ENCODE measurements at regions of chr16 and their contacts with region 1.

Region 1: DNA sequence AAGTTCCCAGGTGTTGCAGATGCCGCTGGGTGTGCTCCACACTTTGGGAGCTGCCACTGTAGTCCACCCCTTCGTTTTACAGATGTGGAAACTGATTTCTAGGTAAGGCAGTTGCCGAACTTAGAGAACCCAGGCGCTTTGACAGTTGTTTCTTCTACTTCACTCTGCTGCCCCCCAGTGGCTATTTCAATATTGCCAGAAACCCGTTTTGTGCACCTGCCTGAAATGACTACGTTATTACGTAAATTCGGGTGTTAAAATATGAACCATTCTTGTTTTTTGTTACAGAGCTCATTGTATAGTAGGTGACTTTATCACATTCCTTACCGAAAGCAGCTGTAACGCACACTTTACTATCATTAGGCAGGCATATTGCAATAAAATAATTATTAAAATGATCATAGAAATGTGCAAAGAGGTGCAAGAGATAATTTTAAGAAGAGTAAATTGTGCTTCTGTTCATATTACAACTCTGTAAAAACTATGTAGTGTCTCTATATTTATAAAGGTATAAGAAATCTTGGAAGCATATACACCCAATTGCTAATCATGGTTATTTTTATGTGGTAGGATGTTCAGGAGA is 44.9 kb downstream of the OTOA start:
- DNase-seq: peak; percentile 67 to 87 (median 74)
- H3K4me3 ChIP-seq: no peak overlapping the region
- H3K4me3 Mint-ChIP-seq: peak overlapping the region in 1 of 7 donors; percentile 18
- H3K27ac ChIP-seq: no peak overlapping the region
- H3K27ac Mint-ChIP-seq: no peak overlapping the region
- H3K4me1 ChIP-seq: peaks cover 7% of the 10 kb centered on the region
- H3K4me1 Mint-ChIP-seq: peaks cover 2 to 6% (median 5%) of the 10 kb centered on the region in 3 donors
- H3K27me3 ChIP-seq: no peaks in the 10 kb centered on the region
- H3K27me3 Mint-ChIP-seq: peaks cover 0 to 1% of the 10 kb centered on the region in 2 donors

Region 2: GRCh38 chr16:21222495-21223337 is 485.9 kb before region 1 on chr16:
- CTCF ChIA-PET with region 1: no interaction called
- POLR2A ChIA-PET with region 1: no interaction called
- DNase-seq: no peak
- H3K4me3 ChIP-seq: no peak overlapping the region
- H3K4me3 Mint-ChIP-seq: no peak overlapping the region
- H3K27ac ChIP-seq: no peak overlapping the region
- H3K27ac Mint-ChIP-seq: no peak overlapping the region
- H3K4me1 ChIP-seq: no peaks in the 10 kb centered on the region
- H3K4me1 Mint-ChIP-seq: no peaks in the 10 kb centered on the region
- H3K27me3 ChIP-seq: no peaks in the 10 kb centered on the region
- H3K27me3 Mint-ChIP-seq: peaks cover 12 to 45% of the 10 kb centered on the region in 2 donors

Region 3: GRCh38 chr16:21584817-21585216 is 123.8 kb before region 1 on chr16:
- CTCF ChIA-PET with region 1: interaction called, 14 read pairs
- POLR2A ChIA-PET with region 1: no interaction called
- DNase-seq: no peak
- H3K4me3 ChIP-seq: no peak overlapping the region
- H3K4me3 Mint-ChIP-seq: no peak overlapping the region
- H3K27ac ChIP-seq: no peak overlapping the region
- H3K27ac Mint-ChIP-seq: peak overlapping the region in 1 of 8 donors; percentile 22
- H3K4me1 ChIP-seq: no peaks in the 10 kb centered on the region
- H3K4me1 Mint-ChIP-seq: peaks cover 0 to 4% (median 1%) of the 10 kb centered on the region in 3 donors
- H3K27me3 ChIP-seq: no peaks in the 10 kb centered on the region
- H3K27me3 Mint-ChIP-seq: no peaks in the 10 kb centered on the region

Region 4: GRCh38 chr16:21646721-21647561 is 61.7 kb before region 1 on chr16:
- CTCF ChIA-PET with region 1: interaction called, 16 read pairs
- POLR2A ChIA-PET with region 1: no interaction called
- DNase-seq: peak; percentile 42 to 85 (median 72)
- H3K4me3 ChIP-seq: peak overlapping the region; percentile 12
- H3K4me3 Mint-ChIP-seq: peak overlapping the region; percentile 68 to 82 (median 78)
- H3K27ac ChIP-seq: peak overlapping the region; percentile 26
- H3K27ac Mint-ChIP-seq: peak overlapping the region; percentile 85 to 98 (median 92)
- H3K4me1 ChIP-seq: peaks cover 57% of the 10 kb centered on the region
- H3K4me1 Mint-ChIP-seq: peaks cover 54 to 70% (median 60%) of the 10 kb centered on the region in 3 donors
- H3K27me3 ChIP-seq: no peaks in the 10 kb centered on the region
- H3K27me3 Mint-ChIP-seq: no peaks in the 10 kb centered on the region

Region 5: DNA sequence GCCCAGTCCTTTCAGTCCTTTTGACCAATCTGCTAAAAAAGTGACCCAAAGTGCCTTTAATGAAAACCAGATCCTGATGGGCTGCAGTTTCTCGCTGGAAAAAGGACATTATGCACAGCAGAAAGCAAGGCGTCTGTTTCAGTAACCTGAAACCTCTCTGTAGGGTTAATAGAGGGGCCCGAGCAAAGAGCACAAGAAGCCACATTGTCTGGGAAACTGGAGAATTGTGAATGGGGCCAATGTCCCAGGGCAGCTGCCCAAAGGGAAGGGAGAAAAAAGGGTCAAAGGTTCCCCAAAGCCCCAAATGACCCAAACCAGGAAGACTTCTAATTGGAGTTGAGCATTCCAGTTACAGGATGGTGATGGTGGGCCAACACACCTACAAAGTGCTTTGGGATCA is 41.9 kb before region 1 on chr16:
- CTCF ChIA-PET with region 1: interaction called, 103 read pairs
- POLR2A ChIA-PET with region 1: no interaction called
- DNase-seq: no peak
- H3K4me3 ChIP-seq: no peak overlapping the region
- H3K4me3 Mint-ChIP-seq: no peak overlapping the region
- H3K27ac ChIP-seq: no peak overlapping the region
- H3K27ac Mint-ChIP-seq: no peak overlapping the region
- H3K4me1 ChIP-seq: peaks cover 10% of the 10 kb centered on the region
- H3K4me1 Mint-ChIP-seq: peaks cover 7 to 16% (median 10%) of the 10 kb centered on the region in 3 donors
- H3K27me3 ChIP-seq: no peaks in the 10 kb centered on the region
- H3K27me3 Mint-ChIP-seq: peaks cover 4 to 11% of the 10 kb centered on the region in 2 donors

Measured in CD8-positive, alpha-beta memory T cell (primary cell).